Calu3 (cell line): ENCODE measurements at regions of chr12 and their contacts with region 1.

Region 1: DNA sequence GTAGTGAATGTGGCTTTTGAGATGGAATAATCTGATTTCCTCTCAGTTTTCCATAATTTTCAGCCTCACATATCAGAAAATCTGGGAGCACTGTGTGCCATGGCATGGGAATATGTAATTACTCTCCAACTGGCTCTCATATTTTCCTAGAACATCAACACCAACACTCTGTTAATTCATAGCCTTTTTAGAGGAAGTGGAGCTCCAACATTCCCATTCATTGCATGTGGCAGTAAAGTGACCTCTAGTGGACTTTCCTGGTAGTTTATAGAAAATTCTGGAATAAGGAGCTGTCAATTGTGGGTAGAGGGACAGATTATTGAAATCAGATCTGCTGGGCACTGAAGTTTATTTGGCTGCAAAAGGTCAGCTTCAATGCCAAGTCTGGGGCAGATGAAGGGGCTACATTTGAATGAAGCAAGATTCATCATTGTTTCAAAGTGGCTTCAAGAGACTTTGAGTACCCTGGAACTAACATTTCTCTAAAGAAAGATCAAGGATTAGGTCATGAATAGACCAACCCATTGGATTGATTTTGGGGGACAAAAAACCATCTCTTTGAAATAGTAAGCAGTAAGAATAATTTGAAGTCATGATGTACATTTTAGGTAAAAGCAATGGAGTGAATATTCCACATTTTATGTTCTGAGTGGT is 23.6 kb upstream of the USP44 start:
- DNase-seq: peak; percentile 9
- H3K4me3 Mint-ChIP-seq: no peak overlapping the region
- H3K27ac Mint-ChIP-seq: no peak overlapping the region
- H3K4me1 Mint-ChIP-seq: no peaks in the 10 kb centered on the region
- H3K27me3 Mint-ChIP-seq: no peaks in the 10 kb centered on the region
- CTCF ChIP-seq: peak; percentile 16

Region 2: DNA sequence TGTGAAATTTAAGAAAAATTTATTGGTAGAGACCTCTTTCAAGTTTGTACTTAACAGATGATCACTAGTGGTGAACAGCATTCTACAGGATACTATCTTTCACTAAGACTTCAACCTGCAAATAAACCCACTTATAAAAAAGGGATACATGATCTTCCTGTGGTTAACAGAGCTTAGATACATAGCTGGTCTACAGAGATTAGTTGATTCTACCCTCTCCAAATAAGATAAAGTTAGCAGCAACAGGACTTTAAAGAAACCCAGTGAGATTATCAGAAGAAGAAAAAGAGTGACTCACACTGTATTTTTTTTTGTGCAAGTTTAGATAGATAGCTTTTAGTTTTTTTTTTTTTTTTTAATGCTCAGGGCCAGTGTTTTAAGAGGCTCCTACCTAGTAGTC is 58.2 kb before region 1 on chr12:
- CTCF ChIA-PET with region 1: no interaction called
- intact Hi-C with region 1: no loop called
- DNase-seq: no peak
- H3K4me3 Mint-ChIP-seq: no peak overlapping the region
- H3K27ac Mint-ChIP-seq: no peak overlapping the region
- H3K4me1 Mint-ChIP-seq: peaks cover 9% of the 10 kb centered on the region
- H3K27me3 Mint-ChIP-seq: no peaks in the 10 kb centered on the region
- CTCF ChIP-seq: no peak

Region 3: DNA sequence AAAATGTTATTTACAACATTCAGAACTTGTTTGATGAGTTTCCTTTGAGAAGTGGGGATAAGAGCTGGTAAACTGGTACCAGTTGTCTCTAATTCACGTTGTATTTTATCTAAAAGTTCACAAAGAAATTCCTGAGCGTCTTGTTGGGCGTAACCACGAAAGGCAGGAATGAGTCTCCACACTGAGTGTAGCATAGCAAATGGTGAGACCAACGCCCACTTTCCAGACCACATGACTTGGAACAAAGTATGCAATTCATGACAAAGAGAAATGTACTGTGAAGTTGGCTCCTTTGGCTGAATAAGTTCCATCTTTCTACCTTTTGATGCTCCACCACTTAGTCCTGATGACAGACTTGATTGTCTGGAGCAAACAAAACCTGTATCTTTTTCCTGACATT is 42.1 kb before region 1 on chr12:
- CTCF ChIA-PET with region 1: interaction called, 14 read pairs
- intact Hi-C with region 1: no loop called
- DNase-seq: no peak
- H3K4me3 Mint-ChIP-seq: no peak overlapping the region
- H3K27ac Mint-ChIP-seq: no peak overlapping the region
- H3K4me1 Mint-ChIP-seq: peaks cover 9% of the 10 kb centered on the region
- H3K27me3 Mint-ChIP-seq: no peaks in the 10 kb centered on the region
- CTCF ChIP-seq: no peak

Region 4: DNA sequence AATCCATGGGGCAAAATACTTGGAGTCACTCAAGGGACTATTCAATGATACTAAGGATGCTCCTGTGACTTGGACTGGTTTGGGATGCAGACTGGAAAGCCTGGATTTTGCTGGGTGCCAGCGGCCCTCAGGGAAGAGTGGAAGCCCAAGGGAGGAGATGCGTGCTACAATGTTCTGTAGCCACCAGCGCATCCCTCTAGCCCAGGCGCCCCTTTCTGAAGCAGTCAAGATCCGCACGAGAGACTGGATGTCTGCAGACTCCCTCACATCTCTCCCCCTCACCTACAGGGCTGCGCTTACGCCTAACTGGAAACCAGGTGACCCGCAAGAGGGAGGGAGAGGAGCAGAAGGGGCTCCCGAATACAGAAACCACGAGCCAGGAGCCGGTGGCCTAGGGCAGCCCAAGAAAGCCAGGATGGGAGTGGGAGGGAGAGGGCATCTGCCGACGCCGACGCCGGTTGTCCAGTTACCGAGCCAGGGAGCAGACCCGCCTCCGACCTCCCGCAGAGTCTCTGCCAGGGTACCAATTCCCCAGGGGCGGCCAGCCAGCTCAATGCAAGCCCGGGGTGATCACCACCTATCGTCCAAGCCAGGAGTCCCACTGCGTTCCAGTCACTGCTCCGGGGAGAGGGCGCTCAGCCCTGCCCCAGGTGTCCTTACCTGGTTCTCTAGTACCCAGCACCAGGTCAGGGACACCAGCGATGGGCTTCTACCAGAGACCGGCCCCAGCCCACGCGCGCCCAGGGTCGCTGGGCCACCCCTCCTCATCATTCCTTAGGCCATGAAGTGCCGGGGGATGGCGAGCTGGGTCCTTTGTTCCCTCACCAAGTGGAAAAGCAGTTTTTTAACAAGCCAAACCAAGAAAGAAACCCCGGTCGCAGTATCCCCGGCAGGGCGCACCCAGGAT is 214.5 kb after region 1 on chr12:
- CTCF ChIA-PET with region 1: no interaction called
- intact Hi-C with region 1: no loop called
- DNase-seq: peak; percentile 80
- H3K4me3 Mint-ChIP-seq: peak overlapping the region; percentile 97
- H3K27ac Mint-ChIP-seq: peak overlapping the region; percentile 87
- H3K4me1 Mint-ChIP-seq: peaks cover 70% of the 10 kb centered on the region
- H3K27me3 Mint-ChIP-seq: no peaks in the 10 kb centered on the region
- CTCF ChIP-seq: no peak